PC-9 (cell line): ENCODE measurements at regions of chr6 and their contacts with region 1.

Region 1: GRCh38 chr6:139028658-139029469 is at the start of gene ABRACL:
- DNase-seq: peak; percentile 46 to 64
- H3K4me3 ChIP-seq: peak within 1 kb of the TSS; percentile 85
- H3K27ac ChIP-seq: peak within 1 kb of the TSS; percentile 69
- H3K4me1 ChIP-seq: peaks cover 19% of the 10 kb centered on the region
- H3K27me3 ChIP-seq: no peaks in the 10 kb centered on the region
- CTCF ChIP-seq: no peak
- total RNA-seq, gene ABRACL: 33.7 and 35.4 TPM in 2 replicates

Region 2: DNA sequence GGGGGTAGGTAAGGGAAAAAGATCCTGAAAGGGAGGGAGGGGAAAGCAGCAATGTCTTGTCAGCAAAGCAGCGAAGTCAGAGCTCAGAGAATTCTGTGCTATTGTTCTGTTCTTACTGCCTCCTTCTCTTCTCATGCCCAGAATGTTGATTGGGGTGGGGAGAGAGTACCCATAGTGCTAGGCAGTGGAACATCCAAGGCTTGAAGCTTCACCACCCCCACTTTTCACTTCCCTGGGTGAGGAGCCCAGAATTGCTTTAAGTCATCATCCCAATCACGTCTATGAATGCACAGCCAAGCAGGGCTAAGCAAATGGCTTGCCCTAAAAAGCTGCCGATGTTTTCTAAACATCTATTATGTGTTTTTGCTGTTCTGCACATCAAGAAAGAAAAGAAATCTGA is 57.3 kb before region 1 on chr6:
- CTCF ChIA-PET with region 1: no interaction called
- POLR2A ChIA-PET with region 1: interaction called, 17 read pairs
- intact Hi-C with region 1: no loop called
- DNase-seq: no peak
- H3K4me3 ChIP-seq: no peak overlapping the region
- H3K27ac ChIP-seq: peak overlapping the region; percentile 42
- H3K4me1 ChIP-seq: peaks cover 43% of the 10 kb centered on the region
- H3K27me3 ChIP-seq: no peaks in the 10 kb centered on the region
- CTCF ChIP-seq: no peak

Region 3: DNA sequence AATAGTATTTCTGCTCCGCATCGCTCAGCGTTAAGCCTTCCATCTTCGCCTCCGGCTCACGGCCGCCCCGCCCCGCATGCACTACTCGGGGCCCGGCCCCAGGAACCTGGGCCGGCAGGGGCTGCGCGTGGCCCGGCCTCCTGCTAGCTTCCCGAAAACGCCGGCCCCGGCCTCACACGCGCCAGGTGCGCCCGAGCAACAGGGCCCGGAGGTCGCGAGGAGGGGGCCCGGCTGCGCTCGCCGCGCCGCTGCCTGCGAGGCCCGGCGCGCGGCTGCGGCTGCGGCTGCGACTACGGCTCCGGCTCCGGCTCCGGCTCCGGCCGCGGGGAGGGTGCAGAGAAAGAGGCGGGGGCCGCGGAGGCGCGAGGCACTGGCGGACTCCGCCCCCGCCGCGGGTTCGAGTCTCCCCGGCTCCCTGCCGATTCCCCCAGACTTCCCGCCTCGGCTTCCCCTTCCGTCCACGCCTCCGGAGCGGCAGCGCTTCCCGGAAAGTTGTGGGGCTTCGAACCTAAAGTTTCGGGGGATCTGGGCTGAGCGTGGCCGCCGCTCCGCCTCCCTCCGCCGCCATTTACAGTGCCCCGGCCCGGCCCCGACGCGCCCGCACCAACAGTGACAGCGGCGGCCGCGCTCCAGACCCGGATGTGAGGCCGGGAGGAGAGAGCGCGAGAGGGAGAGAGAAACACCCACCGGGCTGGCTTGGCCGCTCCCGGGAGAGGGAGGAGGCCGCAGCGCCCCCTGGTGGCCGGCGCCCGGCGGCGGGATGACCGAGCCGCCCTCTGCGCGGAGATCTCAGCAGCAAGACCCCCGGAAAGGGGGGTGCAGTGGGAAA is 41.0 kb before region 1 on chr6 and contains the start of gene REPS1:
- CTCF ChIA-PET with region 1: no interaction called
- POLR2A ChIA-PET with region 1: no interaction called
- intact Hi-C with region 1: loop called (anchors 2 kb)
- DNase-seq: peak; percentile 74 to 83
- H3K4me3 ChIP-seq: peak within 1 kb of the TSS; percentile 77
- H3K27ac ChIP-seq: peak within 1 kb of the TSS; percentile 70
- H3K4me1 ChIP-seq: peaks cover 42% of the 10 kb centered on the region
- H3K27me3 ChIP-seq: no peaks in the 10 kb centered on the region
- CTCF ChIP-seq: peak; percentile 99
- total RNA-seq, gene REPS1: 32.0 and 39.6 TPM in 2 replicates